AG04449 (cell line): ENCODE measurements at regions of chrX and their contacts with region 1.

Region 1: DNA sequence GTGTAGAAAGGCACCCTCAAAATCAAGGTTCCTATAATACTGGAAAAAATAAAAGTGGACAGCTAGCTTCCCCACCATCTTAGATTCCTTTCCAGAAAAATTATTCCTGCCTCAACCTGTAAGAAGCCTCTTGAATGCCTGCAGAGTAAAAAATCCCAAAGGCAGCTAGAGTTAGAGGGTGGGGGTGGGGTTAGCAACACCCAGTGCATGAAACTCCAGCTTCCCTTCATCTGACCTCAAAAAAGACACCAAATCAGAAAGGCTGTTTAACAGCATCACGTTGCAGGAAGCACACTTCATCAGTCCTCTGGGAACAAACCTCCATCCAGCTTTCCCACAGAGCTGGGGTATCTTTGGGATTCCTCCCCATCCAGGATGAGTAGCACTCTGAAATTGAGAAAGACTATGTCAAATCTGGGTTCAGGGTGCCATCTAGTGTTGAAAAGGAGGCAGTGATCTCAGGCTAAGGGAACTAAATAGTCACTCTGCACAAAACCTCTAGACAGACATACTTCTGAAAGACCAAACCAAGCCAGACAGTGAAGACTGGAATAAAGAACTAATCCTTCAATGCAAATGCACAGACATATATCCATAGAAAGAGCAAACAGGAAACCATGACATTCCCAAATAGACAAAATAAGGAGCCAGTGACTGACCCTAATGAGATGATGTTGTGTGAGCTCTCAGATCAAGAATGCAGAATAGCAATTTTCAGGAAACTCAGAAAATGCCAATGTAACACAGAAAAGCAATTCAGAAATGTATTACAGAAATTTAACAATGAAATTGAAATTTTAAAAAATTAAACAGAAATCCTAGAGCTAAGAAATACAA is 97.9 kb downstream of the ARHGEF9 start:
- DNase-seq: peak; percentile 7
- H3K4me3 ChIP-seq: no peak overlapping the region
- CTCF ChIP-seq: peak; percentile 58

Region 2: GRCh38 chrX:63250253-63250868 is 436.7 kb before region 1 on chrX:
- CTCF ChIA-PET with region 1: interaction called, 11 read pairs
- POLR2A ChIA-PET with region 1: no interaction called
- DNase-seq: peak; percentile 23
- H3K4me3 ChIP-seq: no peak overlapping the region
- CTCF ChIP-seq: peak; percentile 73